Activated T-helper 1 cell treated with anti-CD3 and anti-CD28 coated beads, Interleukin-12 subunit alpha, Interleukin-12 subunit beta, Interleukin-2, Interleukin-4 antibody, amounts not matched to agents 30 ng/mL and 10 ng/mL and 1 ng/mL, durations not matched to agents 14 hours and 24 hours and 36 hours (primary cell): ENCODE measurements at regions of chr11 and their contacts with region 1.

Region 1: DNA sequence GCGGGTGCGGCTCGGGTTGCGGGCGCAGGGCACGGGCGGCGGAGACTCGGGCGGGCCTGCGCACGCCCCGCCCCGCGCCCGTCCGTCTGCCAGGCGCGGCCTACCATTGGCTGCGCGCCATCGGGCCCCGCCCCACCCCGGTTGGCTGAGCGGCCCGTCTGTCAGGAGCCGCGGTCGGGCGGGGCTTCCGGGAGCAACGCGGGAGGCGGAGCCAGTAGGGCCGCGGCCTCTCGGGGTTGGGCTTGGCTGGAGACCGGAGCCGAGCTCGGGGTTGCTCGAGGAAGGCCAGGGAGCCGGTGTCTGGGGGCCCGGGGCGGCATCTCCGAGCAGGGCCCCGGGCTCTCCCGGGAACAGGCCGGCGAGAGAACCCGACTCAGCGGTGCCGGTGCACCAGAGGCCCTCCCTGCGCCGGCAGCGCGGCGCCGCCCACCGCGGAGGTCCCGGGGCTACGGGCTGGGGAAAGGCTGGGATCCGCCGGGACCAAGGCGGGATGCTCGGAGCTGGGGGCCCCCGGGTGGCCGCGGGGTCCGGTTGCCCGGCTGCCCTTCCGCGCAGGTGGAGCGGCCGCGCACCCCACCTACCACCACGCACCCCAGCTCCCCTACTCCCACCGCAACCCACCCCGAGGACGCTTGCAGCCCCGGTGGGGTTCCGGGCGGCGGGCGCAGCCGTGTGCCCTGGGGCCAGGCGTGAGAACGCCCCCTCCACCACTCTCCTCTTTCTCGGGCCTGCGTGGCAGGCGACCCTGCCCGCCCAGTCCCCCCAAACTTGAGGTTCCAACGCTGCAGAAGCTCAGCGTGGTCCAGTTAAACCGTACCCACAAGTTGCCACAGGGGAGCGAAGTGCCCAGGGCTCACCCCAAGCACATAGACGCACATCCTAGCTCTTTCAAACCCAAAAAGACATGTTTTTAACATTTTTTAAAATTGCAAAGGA is at the start of gene HRAS:
- DNase-seq: peak; percentile 97
- H3K4me3 Mint-ChIP-seq: peak within 1 kb of the TSS; percentile 87
- H3K27ac Mint-ChIP-seq: peak within 1 kb of the TSS; percentile 89
- H3K4me1 Mint-ChIP-seq: peaks cover 9% of the 10 kb centered on the region
- H3K27me3 Mint-ChIP-seq: no peaks in the 10 kb centered on the region
- total RNA-seq, gene HRAS: 76.6 and 88.7 TPM in 2 replicates

Region 2: DNA sequence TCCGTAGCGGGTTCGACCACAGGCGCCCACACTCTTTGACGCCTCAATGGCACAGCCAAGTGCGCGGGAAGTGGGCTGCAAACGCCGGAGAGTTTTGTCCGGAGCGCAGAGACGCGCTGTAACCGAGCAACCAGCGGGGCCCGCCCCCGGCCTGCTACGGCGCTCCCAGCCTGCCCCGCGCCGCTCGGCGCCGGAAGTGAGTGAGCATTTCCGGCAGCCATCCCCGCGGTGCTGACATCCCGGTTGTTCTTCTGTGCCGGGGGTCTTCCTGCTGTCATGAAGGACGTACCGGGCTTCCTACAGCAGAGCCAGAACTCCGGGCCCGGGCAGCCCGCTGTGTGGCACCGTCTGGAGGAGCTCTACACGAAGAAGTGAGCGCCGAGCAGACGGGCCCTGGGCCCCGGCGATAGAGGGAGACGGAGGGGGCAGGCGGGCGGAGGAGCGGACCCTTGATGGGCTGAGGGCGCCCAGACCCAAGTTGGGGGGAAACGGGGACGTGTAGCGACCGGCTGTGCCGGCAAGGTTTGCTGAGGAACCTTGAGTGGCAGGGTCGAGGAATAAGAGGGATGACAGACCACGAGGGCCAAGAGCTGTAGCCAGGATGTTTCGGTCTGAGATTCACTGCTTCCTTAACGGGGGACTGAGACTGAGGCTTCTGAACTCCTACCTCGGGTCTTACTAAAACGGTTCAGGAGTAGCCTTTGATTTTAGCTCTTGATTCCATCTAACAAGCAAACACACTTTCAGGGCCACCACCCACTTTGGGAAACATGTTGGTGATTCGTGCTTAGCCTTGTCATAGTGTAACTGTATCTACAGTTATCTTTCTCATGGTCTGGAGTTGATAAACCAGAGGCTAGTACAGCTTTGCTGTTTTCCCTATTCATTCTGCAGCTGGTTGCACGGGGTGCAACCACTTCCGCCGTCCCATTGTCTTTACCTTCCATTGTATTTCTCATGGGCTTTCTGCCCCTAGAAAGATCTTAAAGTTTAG is 298.7 kb before region 1 on chr11 and contains the start of gene PSMD13:
- intact Hi-C with region 1: loop called (anchors 1 kb)
- DNase-seq: peak; percentile 84
- H3K4me3 Mint-ChIP-seq: peak within 1 kb of the TSS; percentile 97
- H3K27ac Mint-ChIP-seq: peak within 1 kb of the TSS; percentile 98
- H3K4me1 Mint-ChIP-seq: peaks cover 46% of the 10 kb centered on the region
- H3K27me3 Mint-ChIP-seq: peaks cover 2% of the 10 kb centered on the region
- total RNA-seq, gene PSMD13: 261 and 266 TPM in 2 replicates

Region 3: GRCh38 chr11:518463-519250 is 17.1 kb before region 1 on chr11:
- intact Hi-C with region 1: loop called (anchors 1 kb)
- DNase-seq: peak; percentile 81
- H3K4me3 Mint-ChIP-seq: peak overlapping the region; percentile 75
- H3K27ac Mint-ChIP-seq: peak overlapping the region; percentile 47
- H3K4me1 Mint-ChIP-seq: peaks cover 5% of the 10 kb centered on the region
- H3K27me3 Mint-ChIP-seq: no peaks in the 10 kb centered on the region

Region 4: GRCh38 chr11:560305-561147 is 24.7 kb after region 1 on chr11 and contains the starts of genes LMNTD2 and RASSF7:
- intact Hi-C with region 1: loop called (anchors 1 kb)
- DNase-seq: peak; percentile 94
- H3K4me3 Mint-ChIP-seq: peak within 1 kb of the TSS; percentile 95
- H3K27ac Mint-ChIP-seq: peak within 1 kb of the TSS; percentile 71
- H3K4me1 Mint-ChIP-seq: peaks cover 11% of the 10 kb centered on the region
- H3K27me3 Mint-ChIP-seq: peaks cover 10% of the 10 kb centered on the region
- total RNA-seq, gene LMNTD2: 0.47 and 0.64 TPM in 2 replicates
- total RNA-seq, gene RASSF7: 15.9 and 19.8 TPM in 2 replicates

Region 5: DNA sequence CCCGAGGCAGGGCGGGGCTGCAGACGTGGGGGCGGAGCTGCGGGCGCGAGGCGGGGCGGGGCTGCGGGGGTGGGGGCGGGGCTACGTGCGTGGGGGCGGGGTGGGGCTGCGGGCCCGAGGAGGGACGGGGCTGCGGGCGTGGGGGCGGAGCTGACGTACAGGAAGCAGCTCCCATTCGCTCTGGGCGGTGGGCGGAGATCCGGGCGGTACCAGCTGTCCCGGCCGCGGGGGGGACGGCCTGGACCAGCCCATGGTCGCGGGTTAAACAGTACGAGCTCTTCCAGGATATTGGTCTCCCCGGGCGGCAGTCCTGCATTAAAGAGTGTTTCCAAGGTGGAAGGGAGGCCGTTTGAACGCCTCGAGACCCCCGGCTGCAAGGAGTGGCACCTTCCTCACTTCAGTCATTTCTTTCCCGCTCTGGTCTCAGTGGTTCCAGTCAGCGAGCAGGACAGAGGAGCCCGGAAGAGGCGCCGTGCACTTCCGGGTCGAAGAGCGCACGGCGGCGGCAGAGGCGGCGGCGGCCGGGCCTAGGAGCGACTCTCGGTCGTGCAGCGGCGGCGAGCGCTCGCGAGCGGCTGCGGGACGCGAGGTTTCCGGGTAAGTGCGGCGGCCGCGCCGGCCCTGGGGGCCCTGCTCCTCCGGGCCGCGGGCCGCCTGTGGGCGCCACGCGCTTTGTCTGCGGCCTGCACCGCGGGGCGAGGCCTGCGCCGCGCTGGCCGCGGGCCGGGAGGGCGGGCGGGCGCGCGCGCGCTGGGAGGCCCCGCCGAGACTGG is 40.4 kb after region 1 on chr11 and contains the start of gene PHRF1:
- intact Hi-C with region 1: loop called (anchors 1 kb)
- DNase-seq: peak; percentile 91
- H3K4me3 Mint-ChIP-seq: peak within 1 kb of the TSS; percentile 94
- H3K27ac Mint-ChIP-seq: peak within 1 kb of the TSS; percentile 100
- H3K4me1 Mint-ChIP-seq: peaks cover 41% of the 10 kb centered on the region
- H3K27me3 Mint-ChIP-seq: peaks cover 15% of the 10 kb centered on the region
- total RNA-seq, gene PHRF1: 58.6 and 59.8 TPM in 2 replicates

Region 6: GRCh38 chr11:727859-728748 is 192.3 kb after region 1 on chr11:
- intact Hi-C with region 1: loop called (anchors 5 kb)
- DNase-seq: peak; percentile 72
- H3K4me3 Mint-ChIP-seq: no peak overlapping the region
- H3K27ac Mint-ChIP-seq: no peak overlapping the region
- H3K4me1 Mint-ChIP-seq: peaks cover 6% of the 10 kb centered on the region
- H3K27me3 Mint-ChIP-seq: peaks cover 9% of the 10 kb centered on the region